Naive thymus-derived CD8-positive, alpha-beta T cell (primary cell): ENCODE measurements at regions of chr19 and their contacts with region 1.

Region 1: GRCh38 chr19:11374433-11375142 is at the start of gene SWSAP1:
- DNase-seq: peak; percentile 91 to 99 (median 97)
- ATAC-seq: peak; percentile 89 to 90
- H3K4me3 Mint-ChIP-seq: peak within 1 kb of the TSS in 5 of 10 donors; percentile 41 to 71 (median 55)
- H3K27ac Mint-ChIP-seq: no peak within 1 kb of the TSS
- H3K4me1 Mint-ChIP-seq: peaks cover 20 to 30% (median 23%) of the 10 kb centered on the region in 4 donors
- H3K27me3 Mint-ChIP-seq: no peaks in the 10 kb centered on the region
- polyA plus RNA-seq, gene SWSAP1: 4.3 to 5.8 (median 4.7) TPM

Region 2: GRCh38 chr19:11339254-11340098 is 35.1 kb before region 1 on chr19 and contains the start of gene RAB3D:
- POLR2A ChIA-PET with region 1: interaction called, 10 read pairs
- DNase-seq: peak; percentile 16 to 81 (median 54)
- ATAC-seq: peak; percentile 78 to 92
- H3K4me3 Mint-ChIP-seq: peak within 1 kb of the TSS; percentile 71 to 89 (median 79)
- H3K27ac Mint-ChIP-seq: peak within 1 kb of the TSS in 9 of 10 donors; percentile 40 to 90 (median 69)
- H3K4me1 Mint-ChIP-seq: peaks cover 7 to 35% (median 28%) of the 10 kb centered on the region in 4 donors
- H3K27me3 Mint-ChIP-seq: no peaks in the 10 kb centered on the region
- polyA plus RNA-seq, gene RAB3D: 0.80 to 1.4 (median 0.89) TPM

Region 3: DNA sequence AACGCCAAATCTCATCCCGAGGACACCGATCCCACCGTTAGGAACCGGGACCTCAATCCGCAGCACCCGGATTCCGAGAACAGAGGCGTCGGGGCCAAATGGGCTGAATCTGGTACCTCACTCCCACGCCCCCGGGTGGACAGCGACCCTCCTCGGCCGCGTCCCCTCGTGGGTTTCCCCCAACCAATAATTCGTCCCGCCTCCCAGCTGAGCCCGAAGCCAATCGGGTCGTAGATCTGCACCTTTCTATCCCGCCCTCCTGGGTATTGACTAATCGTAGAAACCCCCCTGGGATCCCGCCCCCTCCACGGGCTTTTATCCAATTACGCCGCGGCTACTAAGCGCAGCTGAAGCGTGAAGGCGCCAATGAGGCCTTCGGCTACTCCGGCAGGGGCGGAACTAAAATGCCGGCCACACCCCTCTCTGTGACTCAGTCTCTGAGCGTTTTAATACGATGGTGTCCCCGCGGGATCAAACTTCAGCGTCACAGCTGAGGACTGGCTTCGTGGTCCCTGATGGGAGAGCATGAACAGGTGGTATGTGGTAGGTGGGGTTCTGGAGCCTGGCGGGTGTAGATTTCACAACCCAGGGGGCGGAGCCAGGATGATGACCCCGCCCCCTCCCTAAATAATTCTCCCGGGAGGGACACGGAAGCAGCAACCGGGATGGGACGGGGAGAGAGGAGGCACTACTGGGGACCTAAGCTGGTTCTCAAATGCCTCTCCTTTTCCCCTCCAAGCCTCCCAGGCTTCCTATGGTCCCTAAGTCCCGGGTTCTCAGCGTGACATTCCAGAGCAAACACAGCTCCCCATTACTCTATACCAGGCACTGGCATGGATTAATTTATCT is 28.3 kb before region 1 on chr19 and contains the starts of genes CCDC159 and TMEM205:
- POLR2A ChIA-PET with region 1: interaction called, 40 read pairs
- DNase-seq: peak; percentile 88 to 99 (median 98)
- ATAC-seq: peak; percentile 97 to 99
- H3K4me3 Mint-ChIP-seq: peak within 1 kb of the TSS; percentile 89 to 99 (median 94)
- H3K27ac Mint-ChIP-seq: peak within 1 kb of the TSS; percentile 85 to 98 (median 92)
- H3K4me1 Mint-ChIP-seq: peaks cover 20 to 36% (median 33%) of the 10 kb centered on the region in 4 donors
- H3K27me3 Mint-ChIP-seq: no peaks in the 10 kb centered on the region
- polyA plus RNA-seq, gene CCDC159: 13.7 to 16.8 (median 15.0) TPM
- polyA plus RNA-seq, gene TMEM205: 56.6 to 76.1 (median 66.8) TPM

Region 4: GRCh38 chr19:11422163-11423021 is 47.8 kb after region 1 on chr19:
- POLR2A ChIA-PET with region 1: interaction called, 13 read pairs
- DNase-seq: peak in 9 of 10 donors; percentile 34 to 82 (median 52)
- ATAC-seq: peak; percentile 63 to 73
- H3K4me3 Mint-ChIP-seq: peak overlapping the region; percentile 62 to 88 (median 80)
- H3K27ac Mint-ChIP-seq: peak overlapping the region in 1 of 10 donors; percentile 47
- H3K4me1 Mint-ChIP-seq: peaks cover 18 to 52% (median 46%) of the 10 kb centered on the region in 4 donors
- H3K27me3 Mint-ChIP-seq: peaks cover 16 to 66% (median 37%) of the 10 kb centered on the region in 5 donors

Region 5: GRCh38 chr19:11435058-11435832 is 60.7 kb after region 1 on chr19 and contains the starts of genes ODAD3 and PRKCSH:
- POLR2A ChIA-PET with region 1: interaction called, 31 read pairs
- DNase-seq: peak; percentile 86 to 99 (median 98)
- ATAC-seq: peak; percentile 95 to 96
- H3K4me3 Mint-ChIP-seq: peak within 1 kb of the TSS; percentile 98 to 100 (median 99)
- H3K27ac Mint-ChIP-seq: peak within 1 kb of the TSS; percentile 93 to 99 (median 98)
- H3K4me1 Mint-ChIP-seq: peaks cover 8 to 37% (median 22%) of the 10 kb centered on the region in 4 donors
- H3K27me3 Mint-ChIP-seq: peaks cover 0 to 8% (median 2%) of the 10 kb centered on the region in 5 donors
- polyA plus RNA-seq, gene ODAD3: not detected
- polyA plus RNA-seq, gene PRKCSH: 23.5 to 58.7 (median 28.0) TPM